Spleen (tissue), 13 donors: ENCODE measurements at regions of chr1 and their contacts with region 1.

Region 1: GRCh38 chr1:88888750-88889149 is 2.6 kb downstream of the GTF2B start:
- DNase-seq: no peak
- H3K4me3 ChIP-seq: peak overlapping the region in 1 of 8 donors; percentile 81
- H3K27ac ChIP-seq: no peak overlapping the region
- H3K4me1 ChIP-seq: peaks cover 21 to 71% (median 37%) of the 10 kb centered on the region in 6 donors
- H3K27me3 ChIP-seq: no peaks in the 10 kb centered on the region
- CTCF ChIP-seq: no peak
- POLR2A ChIP-seq: no peak

Region 2: GRCh38 chr1:88683541-88684481 is 204.9 kb before region 1 on chr1 and contains the start of gene PKN2:
- intact Hi-C with region 1: loop called (anchors 10 kb)
- DNase-seq: peak; percentile 100
- H3K4me3 ChIP-seq: peak within 1 kb of the TSS; percentile 73 to 98 (median 95)
- H3K27ac ChIP-seq: peak within 1 kb of the TSS; percentile 86 to 98 (median 97)
- H3K4me1 ChIP-seq: peaks cover 22 to 58% (median 38%) of the 10 kb centered on the region in 6 donors
- H3K27me3 ChIP-seq: no peaks in the 10 kb centered on the region
- CTCF ChIP-seq: peak in 8 of 11 experiments; percentile 13 to 64 (median 46)
- POLR2A ChIP-seq: peak; percentile 65 to 83 (median 68)
- total RNA-seq, gene PKN2: 43.2 to 63.9 (median 52.1) TPM